ENCODE measurements at regions of chr6 and their contacts with region 1.

Region 1: GRCh38 chr6:2931970-2932748 is 29.1 kb upstream of the SERPINB9 start:
- H3K4me3 Mint-ChIP-seq: peak overlapping the region; percentile 24
- H3K27ac Mint-ChIP-seq: no peak overlapping the region
- H3K4me1 Mint-ChIP-seq: peaks cover 9% of the 10 kb centered on the region
- H3K27me3 Mint-ChIP-seq: no peaks in the 10 kb centered on the region

Region 2: DNA sequence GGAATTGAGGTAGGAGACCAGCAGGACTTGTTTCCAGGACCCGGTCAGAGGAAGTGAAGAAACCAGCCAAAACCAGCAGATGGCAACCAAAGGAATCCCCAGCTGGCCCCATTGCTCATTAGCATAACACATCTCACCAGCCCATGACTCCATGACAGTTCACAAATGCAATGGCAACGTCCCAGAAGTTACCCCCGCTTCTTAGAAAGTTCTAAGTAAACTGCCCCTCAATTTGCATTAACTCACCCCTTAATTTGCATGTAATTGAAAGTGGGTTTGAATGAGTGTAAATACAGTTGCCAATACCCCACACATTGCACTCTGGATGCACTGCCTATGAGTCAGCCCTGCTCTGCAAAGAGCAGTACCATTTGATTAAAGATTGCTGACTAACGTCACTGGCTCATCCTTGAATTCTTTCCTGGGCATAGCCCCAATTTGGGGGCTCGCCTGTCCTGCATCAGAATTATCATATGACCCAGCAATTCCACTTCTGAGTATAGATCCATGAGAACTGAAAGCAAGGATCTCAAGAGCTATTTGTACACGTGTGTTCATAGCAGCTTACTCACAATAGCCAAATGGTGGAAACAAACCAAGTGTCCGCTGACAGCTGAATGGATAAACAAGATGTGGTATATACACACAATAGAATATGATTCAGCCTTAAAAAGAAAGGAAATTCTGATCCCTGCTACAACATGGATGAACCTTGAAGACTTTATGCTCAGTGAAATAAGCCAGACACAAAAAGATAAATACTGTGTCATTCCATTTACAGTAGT is 217.9 kb before region 1 on chr6:
- intact Hi-C with region 1: no loop called
- H3K4me3 Mint-ChIP-seq: no peak overlapping the region
- H3K27ac Mint-ChIP-seq: no peak overlapping the region
- H3K4me1 Mint-ChIP-seq: peaks cover 28% of the 10 kb centered on the region
- H3K27me3 Mint-ChIP-seq: no peaks in the 10 kb centered on the region

Region 3: DNA sequence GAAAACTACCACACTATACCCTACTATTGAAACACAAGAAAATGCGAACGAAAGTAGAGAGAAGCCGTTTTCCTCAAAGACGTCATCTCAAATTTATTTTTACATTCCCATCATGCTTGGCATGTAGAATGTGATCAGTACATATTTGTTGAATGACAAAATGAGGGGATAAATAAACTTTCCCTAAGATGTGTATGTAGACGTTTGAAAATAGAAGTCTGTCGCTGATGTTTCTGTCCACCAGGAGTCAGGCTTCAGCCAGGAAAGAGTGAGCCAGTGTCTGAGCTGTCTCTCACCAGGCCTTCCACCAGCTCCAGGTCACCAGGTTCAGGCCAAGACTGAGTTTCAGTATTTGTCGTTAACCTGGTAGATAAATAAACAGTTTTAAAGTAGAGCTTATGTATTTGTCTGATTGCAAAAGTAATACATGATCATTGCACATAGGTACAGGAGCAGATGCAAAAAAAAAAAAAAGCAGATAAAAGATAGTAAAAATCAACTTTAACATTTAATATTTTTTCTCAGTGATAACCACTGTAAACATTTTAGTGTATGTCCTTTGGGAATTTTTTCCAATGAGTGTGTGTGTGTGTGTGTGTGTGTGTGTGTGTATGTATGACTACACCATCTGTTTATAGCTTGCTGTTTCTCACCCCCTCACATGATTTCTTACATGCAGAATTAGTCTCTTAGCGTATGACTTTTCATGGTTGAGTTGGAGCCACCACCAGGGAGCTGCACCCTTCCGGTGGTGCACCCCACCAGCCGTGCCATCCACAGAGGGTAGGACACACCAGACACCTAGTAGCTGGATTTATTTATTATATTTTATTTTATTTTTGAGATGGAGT is 140.8 kb before region 1 on chr6:
- intact Hi-C with region 1: loop called (anchors 5 kb)
- H3K4me3 Mint-ChIP-seq: no peak overlapping the region
- H3K27ac Mint-ChIP-seq: peak overlapping the region; percentile 44
- H3K4me1 Mint-ChIP-seq: peaks cover 53% of the 10 kb centered on the region
- H3K27me3 Mint-ChIP-seq: no peaks in the 10 kb centered on the region

Region 4: GRCh38 chr6:2846873-2847224 is 85.3 kb before region 1 on chr6:
- intact Hi-C with region 1: loop called (anchors 1 kb)
- H3K4me3 Mint-ChIP-seq: no peak overlapping the region
- H3K27ac Mint-ChIP-seq: peak overlapping the region; percentile 70
- H3K4me1 Mint-ChIP-seq: peaks cover 61% of the 10 kb centered on the region
- H3K27me3 Mint-ChIP-seq: no peaks in the 10 kb centered on the region

Region 5: GRCh38 chr6:2899596-2899995 is 32.6 kb before region 1 on chr6:
- intact Hi-C with region 1: loop called (anchors 5 kb)
- H3K4me3 Mint-ChIP-seq: no peak overlapping the region
- H3K27ac Mint-ChIP-seq: no peak overlapping the region
- H3K4me1 Mint-ChIP-seq: peaks cover 59% of the 10 kb centered on the region
- H3K27me3 Mint-ChIP-seq: no peaks in the 10 kb centered on the region

Region 6: GRCh38 chr6:2976571-2977085 is 44.5 kb after region 1 on chr6:
- intact Hi-C with region 1: no loop called
- H3K4me3 Mint-ChIP-seq: no peak overlapping the region
- H3K27ac Mint-ChIP-seq: peak overlapping the region; percentile 74
- H3K4me1 Mint-ChIP-seq: peaks cover 38% of the 10 kb centered on the region
- H3K27me3 Mint-ChIP-seq: no peaks in the 10 kb centered on the region

Measured in dendritic cell treated with granulocyte-macrophage colony-stimulating factor and Interleukin-4, amounts not matched to agents 40 ng/mL and 50 ng/mL, for 4 days (primary cell).